Posterior cingulate gyrus (tissue), 11 donors: ENCODE measurements at regions of chr12 and their contacts with region 1.

Region 1: GRCh38 chr12:8026291-8026900 is 6.1 kb upstream of the FOXJ2 start:
- DNase-seq: peak; percentile 92 to 99 (median 97)

Region 2: GRCh38 chr12:8082808-8083100 is 56.4 kb after region 1 on chr12:
- intact Hi-C with region 1: loop called (anchors 2 kb)
- DNase-seq: no peak